Transverse colon (tissue), 4 donors: ENCODE measurements at regions of chr9 and their contacts with region 1.

Region 1: DNA sequence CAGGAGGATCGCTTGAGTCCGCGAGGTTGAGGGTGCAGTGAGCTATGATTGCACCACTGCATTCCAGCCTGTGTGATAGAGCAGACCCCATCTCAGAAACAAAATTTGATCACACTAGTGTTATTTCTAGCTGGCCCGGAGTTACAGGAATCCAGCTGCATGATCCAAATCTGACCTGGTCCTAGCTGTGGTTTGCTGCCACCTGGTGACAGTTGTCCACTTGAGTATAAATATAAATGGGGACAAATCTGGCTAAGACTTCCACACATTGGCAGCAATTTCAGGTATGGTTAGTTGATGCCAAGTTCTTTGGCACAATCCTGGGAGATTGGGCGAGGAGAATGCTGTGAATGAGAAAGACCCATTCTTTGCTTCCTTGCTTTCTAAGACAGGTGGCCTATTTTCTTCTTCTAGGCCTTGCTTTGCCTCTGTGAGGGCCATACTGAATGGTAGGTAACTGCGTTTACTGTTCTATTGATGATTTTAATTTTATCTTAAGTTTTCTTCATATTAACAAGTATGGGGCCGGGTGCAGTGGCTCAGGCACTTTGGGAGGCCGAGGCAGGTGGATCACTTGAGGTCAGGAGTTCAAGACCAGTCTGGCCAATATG is 35.4 kb downstream of the UBE2R2 start:
- DNase-seq: peak; percentile 81
- H3K4me3 ChIP-seq: no peak overlapping the region
- H3K27ac ChIP-seq: no peak overlapping the region
- H3K4me1 ChIP-seq: peaks cover 22 to 77% (median 34%) of the 10 kb centered on the region in 4 donors
- H3K27me3 ChIP-seq: no peaks in the 10 kb centered on the region
- CTCF ChIP-seq: peak; percentile 57 to 75 (median 58)
- EP300 ChIP-seq: no peak
- POLR2A ChIP-seq: no peak

Region 2: DNA sequence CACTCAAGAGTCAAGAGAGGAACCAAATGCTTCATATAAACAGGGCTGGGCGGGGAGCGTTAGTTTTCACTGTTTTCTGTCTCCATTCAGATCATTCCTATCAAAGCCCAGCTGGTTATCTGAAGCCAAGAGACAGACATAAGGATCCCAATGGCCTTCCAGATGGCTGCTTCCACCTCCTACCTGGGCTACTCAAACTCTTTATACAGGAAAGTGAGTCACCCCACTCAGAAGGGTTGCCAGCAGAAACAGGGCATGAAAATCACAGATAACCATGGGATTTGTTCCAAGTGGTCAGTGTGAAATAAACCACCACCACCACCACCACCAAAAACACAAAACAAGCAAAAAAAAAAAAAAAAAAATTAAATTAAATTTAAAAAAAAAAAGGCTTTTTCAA is 51.4 kb before region 1 on chr9:
- in situ Hi-C with region 1: loop called in 1 of 4 experiments (anchors 10 kb)
- intact Hi-C with region 1: no loop called
- DNase-seq: no peak
- H3K4me3 ChIP-seq: no peak overlapping the region
- H3K27ac ChIP-seq: no peak overlapping the region
- H3K4me1 ChIP-seq: no peaks in the 10 kb centered on the region
- H3K27me3 ChIP-seq: no peaks in the 10 kb centered on the region
- CTCF ChIP-seq: no peak
- EP300 ChIP-seq: no peak
- POLR2A ChIP-seq: no peak

Region 3: GRCh38 chr9:33816327-33817252 is 35.7 kb before region 1 on chr9 and contains the start of gene UBE2R2:
- in situ Hi-C with region 1: no loop called
- intact Hi-C with region 1: loop called (anchors 5 kb)
- DNase-seq: peak; percentile 94
- H3K4me3 ChIP-seq: peak within 1 kb of the TSS; percentile 72 to 96 (median 90)
- H3K27ac ChIP-seq: peak within 1 kb of the TSS; percentile 97 to 100 (median 100)
- H3K4me1 ChIP-seq: peaks cover 30 to 65% (median 40%) of the 10 kb centered on the region in 4 donors
- H3K27me3 ChIP-seq: no peaks in the 10 kb centered on the region
- CTCF ChIP-seq: no peak
- EP300 ChIP-seq: no peak
- POLR2A ChIP-seq: peak; percentile 91
- total RNA-seq, gene UBE2R2: 13.9 to 30.8 (median 22.9) TPM